PC-3 (cell line): ENCODE measurements at regions of chr14 and their contacts with region 1.

Region 1: GRCh38 chr14:70192915-70193314 is 4.2 kb upstream of the SLC8A3 start:
- DNase-seq: no peak
- ATAC-seq: peak; percentile 70
- H3K4me3 ChIP-seq: no peak overlapping the region
- H3K27ac ChIP-seq: no peak overlapping the region
- H3K4me1 ChIP-seq: no peaks in the 10 kb centered on the region
- H3K27me3 ChIP-seq: peaks cover 62% of the 10 kb centered on the region
- CTCF ChIP-seq: 0 out of 2 replicates have a peak, but pooled peaks have one; percentile 16

Region 2: GRCh38 chr14:69879175-69880043 is 313.5 kb before region 1 on chr14 and contains the start of gene SMOC1:
- CTCF ChIA-PET with region 1: no interaction called
- POLR2A ChIA-PET with region 1: no interaction called
- intact Hi-C with region 1: no loop called
- DNase-seq: no peak
- ATAC-seq: peak; percentile 60
- H3K4me3 ChIP-seq: no peak within 1 kb of the TSS
- H3K27ac ChIP-seq: no peak within 1 kb of the TSS
- H3K4me1 ChIP-seq: no peaks in the 10 kb centered on the region
- H3K27me3 ChIP-seq: peaks cover 88% of the 10 kb centered on the region
- CTCF ChIP-seq: no peak
- total RNA-seq, gene SMOC1: not detected in 2 replicates

Region 3: DNA sequence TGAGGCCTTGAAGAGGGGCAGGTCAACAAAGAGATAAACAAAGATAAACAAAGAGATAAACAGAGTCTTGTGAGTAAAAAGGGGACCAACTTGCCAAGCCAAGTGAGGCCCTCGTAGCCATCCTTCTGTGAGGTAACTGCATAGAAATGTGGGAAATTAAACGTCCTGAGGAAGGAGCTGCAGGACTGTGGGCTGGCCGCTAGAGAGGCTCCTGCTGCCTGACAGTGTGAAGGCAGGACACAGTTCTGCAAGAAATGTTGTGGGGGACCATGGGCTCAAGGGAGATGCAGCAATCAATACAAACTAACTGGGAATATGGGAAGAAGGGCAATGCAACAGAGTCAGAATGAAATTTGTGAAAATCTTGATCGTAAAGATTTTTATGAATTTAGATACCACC is 96.0 kb before region 1 on chr14:
- CTCF ChIA-PET with region 1: no interaction called
- POLR2A ChIA-PET with region 1: no interaction called
- intact Hi-C with region 1: loop called (anchors 5 kb)
- DNase-seq: peak; percentile 33
- ATAC-seq: peak; percentile 95
- H3K4me3 ChIP-seq: no peak overlapping the region
- H3K27ac ChIP-seq: no peak overlapping the region
- H3K4me1 ChIP-seq: no peaks in the 10 kb centered on the region
- H3K27me3 ChIP-seq: peaks cover 75% of the 10 kb centered on the region
- CTCF ChIP-seq: peak; percentile 51; the same call in 1 of the 2 replicates

Region 4: DNA sequence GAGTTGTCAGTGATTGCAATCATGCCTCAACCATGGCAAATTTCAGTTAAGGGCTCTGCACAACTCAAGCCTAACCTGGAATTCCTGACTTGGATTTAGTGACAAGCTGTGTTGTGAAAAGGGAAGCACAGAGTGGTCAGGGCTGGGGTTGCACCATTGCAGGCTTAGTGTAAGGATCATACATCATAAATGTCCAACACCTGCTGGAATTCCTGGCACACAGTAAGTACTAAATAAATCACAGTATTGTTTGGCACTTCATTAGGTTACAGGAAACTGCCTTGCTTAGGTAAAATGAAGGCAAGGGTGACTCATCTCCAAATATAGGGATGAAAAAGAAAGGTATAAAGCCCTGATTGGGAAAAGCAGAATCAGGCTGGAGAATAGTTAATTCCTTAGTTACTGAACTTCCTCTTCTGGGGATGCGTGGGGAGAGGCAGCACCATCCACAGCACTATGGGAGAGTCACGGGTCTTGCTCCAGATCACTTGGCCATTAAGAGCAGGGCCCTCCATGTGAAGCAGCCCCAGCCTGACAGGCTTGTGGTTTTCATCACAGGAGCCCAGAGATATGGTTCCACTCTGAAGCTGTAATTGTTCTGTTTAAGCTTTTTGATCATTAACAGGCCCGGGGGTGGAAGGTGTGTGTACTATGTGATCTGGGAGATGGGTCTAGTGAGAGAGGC is 43.9 kb before region 1 on chr14:
- CTCF ChIA-PET with region 1: no interaction called
- POLR2A ChIA-PET with region 1: no interaction called
- intact Hi-C with region 1: no loop called
- DNase-seq: no peak
- ATAC-seq: no peak
- H3K4me3 ChIP-seq: no peak overlapping the region
- H3K27ac ChIP-seq: no peak overlapping the region
- H3K4me1 ChIP-seq: no peaks in the 10 kb centered on the region
- H3K27me3 ChIP-seq: peaks cover 89% of the 10 kb centered on the region
- CTCF ChIP-seq: no peak